ENCODE measurements at regions of chr4 and their contacts with region 1.

Region 1: GRCh38 chr4:87848622-87849351 is 16.0 kb downstream of the MEPE start:
- DNase-seq: peak; percentile 51
- ATAC-seq: peak; percentile 97
- H3K4me3 ChIP-seq: peak overlapping the region; percentile 30 to 48
- H3K27ac ChIP-seq: no peak overlapping the region
- H3K4me1 ChIP-seq: peaks cover 0 to 9% of the 10 kb centered on the region in 2 experiments; a peak in 3 of 4 replicates
- H3K27me3 ChIP-seq: no peaks in the 10 kb centered on the region
- CTCF ChIP-seq: peak; percentile 55 to 62 (median 58)
- POLR2A ChIP-seq: no peak
- RAD21 ChIP-seq: peak; percentile 55

Region 2: DNA sequence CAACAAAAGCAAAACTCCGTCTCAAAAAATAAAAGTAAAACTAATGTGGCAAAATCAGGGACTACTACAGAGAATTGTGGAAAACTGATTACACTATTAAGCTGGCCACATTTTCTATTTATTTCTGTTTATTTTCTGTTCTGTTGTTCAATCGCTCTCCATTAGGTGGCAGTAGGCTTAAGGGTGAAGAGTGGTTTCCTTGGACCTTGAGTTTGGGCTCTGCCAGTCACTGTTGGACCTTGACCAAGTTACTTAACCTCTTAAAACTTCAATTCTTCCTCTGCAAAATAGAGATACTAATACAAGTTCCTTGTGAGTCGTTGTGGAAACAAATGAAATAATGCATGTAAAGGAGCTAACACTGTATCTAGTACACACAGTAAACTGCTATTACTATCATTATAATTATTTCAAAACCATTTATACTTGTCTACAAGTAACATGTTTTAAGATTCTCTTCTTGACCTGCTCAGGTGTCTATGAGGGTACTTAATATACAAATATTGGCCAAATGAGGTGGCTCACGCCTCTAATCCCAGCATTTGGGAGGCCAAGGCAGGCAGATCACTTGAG is 473.0 kb before region 1 on chr4:
- CTCF ChIA-PET with region 1: interaction called, 10 read pairs
- POLR2A ChIA-PET with region 1: no interaction called
- RAD21 ChIA-PET with region 1: no interaction called
- intact Hi-C with region 1: no loop called
- DNase-seq: peak; percentile 22
- ATAC-seq: peak; percentile 65; the same call in 1 of the 2 replicates
- H3K4me3 ChIP-seq: no peak overlapping the region
- H3K27ac ChIP-seq: no peak overlapping the region
- H3K4me1 ChIP-seq: no peaks in the 10 kb centered on the region
- H3K27me3 ChIP-seq: no peaks in the 10 kb centered on the region
- CTCF ChIP-seq: peak; percentile 61 to 79 (median 66); a peak in 5 of 6 replicates
- POLR2A ChIP-seq: no peak
- RAD21 ChIP-seq: peak; percentile 79

Region 3: GRCh38 chr4:87543835-87544461 is 304.8 kb before region 1 on chr4:
- CTCF ChIA-PET with region 1: interaction called, 32 read pairs
- POLR2A ChIA-PET with region 1: no interaction called
- RAD21 ChIA-PET with region 1: interaction called in 1 of 2 experiments, 3 read pairs
- intact Hi-C with region 1: no loop called
- DNase-seq: peak; percentile 38
- ATAC-seq: peak; percentile 97
- H3K4me3 ChIP-seq: no peak overlapping the region
- H3K27ac ChIP-seq: no peak overlapping the region
- H3K4me1 ChIP-seq: no peaks in the 10 kb centered on the region
- H3K27me3 ChIP-seq: 0 out of 2 replicates have a peak, but pooled peaks cover 3% of the 10 kb centered on the region
- CTCF ChIP-seq: peak; percentile 65 to 71 (median 69)
- POLR2A ChIP-seq: no peak
- RAD21 ChIP-seq: peak; percentile 74

Region 4: GRCh38 chr4:87624698-87625097 is 224.1 kb before region 1 on chr4:
- CTCF ChIA-PET with region 1: no interaction called
- POLR2A ChIA-PET with region 1: no interaction called
- RAD21 ChIA-PET with region 1: no interaction called
- intact Hi-C with region 1: no loop called
- DNase-seq: no peak
- ATAC-seq: no peak
- H3K4me3 ChIP-seq: no peak overlapping the region
- H3K27ac ChIP-seq: no peak overlapping the region
- H3K4me1 ChIP-seq: no peaks in the 10 kb centered on the region
- H3K27me3 ChIP-seq: peaks cover 15% of the 10 kb centered on the region
- CTCF ChIP-seq: no peak
- POLR2A ChIP-seq: no peak
- RAD21 ChIP-seq: no peak

Region 5: GRCh38 chr4:87669373-87669772 is 179.4 kb before region 1 on chr4:
- CTCF ChIA-PET with region 1: no interaction called
- POLR2A ChIA-PET with region 1: no interaction called
- RAD21 ChIA-PET with region 1: no interaction called
- intact Hi-C with region 1: no loop called
- DNase-seq: no peak
- ATAC-seq: no peak
- H3K4me3 ChIP-seq: no peak overlapping the region
- H3K27ac ChIP-seq: no peak overlapping the region
- H3K4me1 ChIP-seq: no peaks in the 10 kb centered on the region
- H3K27me3 ChIP-seq: no peaks in the 10 kb centered on the region
- CTCF ChIP-seq: no peak
- POLR2A ChIP-seq: no peak
- RAD21 ChIP-seq: no peak

Region 6: GRCh38 chr4:87985097-87985886 is 136.5 kb after region 1 on chr4:
- CTCF ChIA-PET with region 1: interaction called, 43 read pairs
- POLR2A ChIA-PET with region 1: no interaction called
- RAD21 ChIA-PET with region 1: interaction called, 8 to 15 read pairs
- intact Hi-C with region 1: loop called (anchors 1 kb)
- DNase-seq: peak; percentile 58
- ATAC-seq: peak; percentile 100
- H3K4me3 ChIP-seq: no peak overlapping the region
- H3K27ac ChIP-seq: no peak overlapping the region
- H3K4me1 ChIP-seq: peaks cover 0 to 5% of the 10 kb centered on the region in 2 experiments; a peak in 1 of 4 replicates
- H3K27me3 ChIP-seq: no peaks in the 10 kb centered on the region
- CTCF ChIP-seq: peak; percentile 68 to 93 (median 82)
- POLR2A ChIP-seq: no peak
- RAD21 ChIP-seq: peak; percentile 90

Region 7: GRCh38 chr4:88119951-88120350 is 271.2 kb after region 1 on chr4:
- CTCF ChIA-PET with region 1: no interaction called
- POLR2A ChIA-PET with region 1: no interaction called
- RAD21 ChIA-PET with region 1: no interaction called
- intact Hi-C with region 1: no loop called
- DNase-seq: no peak
- ATAC-seq: no peak
- H3K4me3 ChIP-seq: no peak overlapping the region
- H3K27ac ChIP-seq: no peak overlapping the region
- H3K4me1 ChIP-seq: no peaks in the 10 kb centered on the region
- H3K27me3 ChIP-seq: no peaks in the 10 kb centered on the region
- CTCF ChIP-seq: no peak
- POLR2A ChIP-seq: no peak
- RAD21 ChIP-seq: no peak

Region 8: DNA sequence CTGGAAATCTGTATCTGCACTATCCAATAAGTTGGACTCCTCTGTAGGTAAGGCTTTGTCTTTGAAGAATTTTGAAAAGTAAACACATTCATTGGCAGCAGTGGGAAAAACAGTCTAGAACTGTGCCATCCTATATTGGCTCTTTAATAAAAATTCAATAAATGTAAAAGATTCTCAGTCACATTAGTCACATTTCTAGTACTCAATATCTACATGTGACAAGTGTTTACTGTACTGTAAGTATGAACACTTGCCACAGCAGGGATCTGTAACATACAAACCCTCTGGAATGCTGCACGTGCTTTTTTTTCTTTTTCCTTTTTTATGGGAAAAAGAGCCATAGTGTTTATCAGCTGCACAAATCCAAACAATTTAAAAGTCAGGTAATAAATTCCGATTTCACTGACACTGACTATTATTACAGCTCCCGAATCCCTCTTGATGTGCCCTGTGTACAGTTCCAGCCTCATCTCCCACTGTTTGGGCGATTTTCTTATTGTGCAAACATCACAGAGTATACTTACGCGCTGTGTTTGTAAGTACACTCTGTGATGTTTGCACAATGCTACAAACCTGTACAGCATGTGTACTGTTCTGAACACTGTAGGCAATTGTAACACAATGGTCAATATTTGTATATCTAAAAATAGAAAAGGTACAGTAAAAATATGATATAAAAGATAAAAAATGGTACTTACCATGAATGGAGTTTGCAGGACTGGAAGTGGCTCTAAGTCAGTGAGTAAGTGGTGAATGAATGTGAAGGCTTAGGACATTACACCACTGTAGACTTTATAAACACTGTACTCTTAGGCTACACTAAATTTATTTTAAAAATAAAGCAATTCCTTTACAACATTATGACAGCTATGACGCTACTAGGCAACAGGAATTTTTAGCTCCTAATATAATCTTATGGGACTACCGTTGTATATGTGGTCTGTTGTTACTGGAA is 666.0 kb after region 1 on chr4:
- CTCF ChIA-PET with region 1: no interaction called
- POLR2A ChIA-PET with region 1: no interaction called
- RAD21 ChIA-PET with region 1: no interaction called
- intact Hi-C with region 1: loop called (anchors 10 kb)
- DNase-seq: no peak
- ATAC-seq: no peak
- H3K4me3 ChIP-seq: no peak overlapping the region
- H3K27ac ChIP-seq: no peak overlapping the region
- H3K4me1 ChIP-seq: no peaks in the 10 kb centered on the region
- H3K27me3 ChIP-seq: no peaks in the 10 kb centered on the region
- CTCF ChIP-seq: no peak
- POLR2A ChIP-seq: no peak
- RAD21 ChIP-seq: no peak